A549 (cell line): ENCODE measurements at regions of chr17 and their contacts with region 1.

Region 1: DNA sequence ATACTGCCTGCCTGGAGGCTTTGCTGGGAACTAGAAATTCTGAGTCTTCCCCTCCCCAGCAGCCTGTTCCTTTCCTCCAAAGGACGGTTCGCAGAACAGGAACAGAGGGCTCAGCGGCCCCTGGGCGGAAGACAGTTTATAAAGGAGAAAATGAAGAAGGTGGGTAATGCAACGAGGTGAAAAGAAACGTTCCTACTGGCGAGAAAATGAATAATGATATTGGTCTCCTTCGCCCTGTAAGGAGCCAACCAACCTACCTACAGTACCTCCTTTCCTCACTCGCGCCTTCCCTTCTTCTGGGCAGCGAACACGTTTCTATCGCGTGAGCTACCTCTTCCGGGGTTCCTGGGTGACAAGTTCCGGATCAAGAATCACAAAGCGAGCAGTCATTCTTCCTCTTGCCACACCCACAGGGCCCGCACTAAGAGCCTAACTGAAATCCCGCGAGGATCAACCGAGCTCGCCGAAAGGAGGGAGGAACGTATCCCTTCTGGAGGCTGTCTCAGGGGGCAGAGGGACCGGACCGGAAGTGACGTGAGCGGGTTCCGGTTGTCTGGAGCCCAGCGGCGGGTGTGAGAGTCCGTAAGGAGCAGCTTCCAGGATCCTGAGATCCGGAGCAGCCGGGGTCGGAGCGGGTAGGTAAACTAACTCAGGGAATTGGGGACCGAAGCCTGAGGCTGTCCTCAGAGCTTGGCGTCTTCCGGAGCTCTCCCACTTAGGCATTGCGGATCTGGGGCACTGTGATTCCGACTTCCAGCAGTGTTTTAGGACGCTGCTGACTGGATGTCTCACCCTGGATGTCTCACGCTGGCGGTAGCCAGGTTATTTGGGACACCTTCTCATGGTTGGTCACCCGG is at the starts of genes PTRH2 and VMP1:
- DNase-seq: peak; percentile 100
- ATAC-seq: peak; percentile 97 to 98
- H3K4me3 ChIP-seq: peak within 1 kb of the TSS; percentile 68
- H3K27ac ChIP-seq: peak within 1 kb of the TSS; percentile 87 to 92
- H3K4me1 ChIP-seq: peaks cover 44% of the 10 kb centered on the region
- CTCF ChIP-seq: no peak
- EP300 ChIP-seq: no peak
- POLR2A ChIP-seq: peak; percentile 68
- RAD21 ChIP-seq: 0 out of 5 replicates have a peak, but pooled peaks of 1 of the 2 experiments have one; percentile 2
- polyA plus RNA-seq, gene PTRH2: 169 and 171 TPM in 2 replicates
- polyA plus RNA-seq, gene VMP1: 638 and 726 TPM in 2 replicates

Region 2: GRCh38 chr17:59619293-59620063 is 87.9 kb before region 1 on chr17 and contains the start of gene CLTC:
- CTCF ChIA-PET with region 1: no interaction called
- POLR2A ChIA-PET with region 1: interaction called, 38 read pairs
- DNase-seq: peak; percentile 93 to 99
- ATAC-seq: peak; percentile 93
- H3K4me3 ChIP-seq: peak within 1 kb of the TSS; percentile 93
- H3K27ac ChIP-seq: peak within 1 kb of the TSS; percentile 97 to 98
- H3K4me1 ChIP-seq: peaks cover 43% of the 10 kb centered on the region
- CTCF ChIP-seq: no peak
- EP300 ChIP-seq: peak in 1 of 2 experiments; percentile 73; a peak in 2 of 5 replicates
- POLR2A ChIP-seq: peak; percentile 84
- RAD21 ChIP-seq: no peak; a peak in 1 of 5 replicates
- polyA plus RNA-seq, gene CLTC: 360 and 376 TPM in 2 replicates

Region 3: GRCh38 chr17:59680314-59680713 is 27.0 kb before region 1 on chr17:
- CTCF ChIA-PET with region 1: interaction called, 5 read pairs
- POLR2A ChIA-PET with region 1: interaction called, 11 read pairs
- DNase-seq: no peak
- ATAC-seq: no peak
- H3K4me3 ChIP-seq: no peak overlapping the region
- H3K27ac ChIP-seq: no peak overlapping the region
- H3K4me1 ChIP-seq: no peaks in the 10 kb centered on the region
- CTCF ChIP-seq: no peak
- EP300 ChIP-seq: no peak
- POLR2A ChIP-seq: no peak
- RAD21 ChIP-seq: no peak

Region 4: GRCh38 chr17:59722595-59723474 is 15.5 kb after region 1 on chr17:
- CTCF ChIA-PET with region 1: interaction called, 12 read pairs
- POLR2A ChIA-PET with region 1: interaction called, 4 read pairs
- DNase-seq: no peak
- ATAC-seq: peak; percentile 29 to 35; a peak in 3 of 6 replicates
- H3K4me3 ChIP-seq: no peak overlapping the region
- H3K27ac ChIP-seq: no peak overlapping the region
- H3K4me1 ChIP-seq: peaks cover 39% of the 10 kb centered on the region
- CTCF ChIP-seq: no peak
- EP300 ChIP-seq: no peak
- POLR2A ChIP-seq: no peak
- RAD21 ChIP-seq: no peak